Posterior vena cava (tissue), 2 donors: ENCODE measurements at regions of chr18 and their contacts with region 1.

Region 1: DNA sequence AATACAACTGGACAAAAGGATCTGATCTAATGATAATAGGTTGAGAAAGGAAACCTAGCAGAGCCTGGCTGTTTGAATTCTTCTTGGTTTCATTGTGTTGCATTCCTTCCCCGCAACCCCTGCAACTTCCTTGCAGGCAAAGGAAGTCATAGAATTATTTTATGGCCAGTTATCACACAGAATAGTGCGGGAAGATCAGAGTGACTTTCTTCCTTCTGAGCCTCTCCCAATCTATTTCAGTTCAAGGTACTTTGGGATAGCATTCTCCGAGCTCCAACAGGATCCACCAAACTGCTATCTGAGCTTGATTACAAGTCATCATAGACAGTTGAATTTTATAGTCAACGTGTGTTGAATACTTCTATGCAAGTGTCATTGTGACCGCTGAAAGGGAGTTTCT is 441.1 kb downstream of the DCC start:
- DNase-seq: no peak

Region 2: GRCh38 chr18:52570975-52571374 is 210.1 kb before region 1 on chr18:
- intact Hi-C with region 1: no loop called
- DNase-seq: no peak

Region 3: GRCh38 chr18:52813635-52814416 is 32.7 kb after region 1 on chr18:
- intact Hi-C with region 1: loop called in 1 of 2 experiments (anchors 1 kb)
- DNase-seq: no peak